H1 (cell line): ENCODE measurements at regions of chr22 and their contacts with region 1.

Region 1: GRCh38 chr22:38317122-38317994 is at the start of gene CSNK1E:
- DNase-seq: peak in 1 of 2 experiments; percentile 84
- H3K4me3 ChIP-seq: peak within 1 kb of the TSS; percentile 88 to 99 (median 94)
- H3K27ac ChIP-seq: peak within 1 kb of the TSS; percentile 84
- H3K4me1 ChIP-seq: peaks cover 15 to 46% (median 40%) of the 10 kb centered on the region in 4 experiments
- H3K27me3 ChIP-seq: no peaks in the 10 kb centered on the region
- CTCF ChIP-seq: no peak
- EP300 ChIP-seq: no peak
- POLR2A ChIP-seq: peak; percentile 50 to 62
- RAD21 ChIP-seq: no peak
- total RNA-seq, gene CSNK1E: 244 and 247 TPM in 2 replicates

Region 2: DNA sequence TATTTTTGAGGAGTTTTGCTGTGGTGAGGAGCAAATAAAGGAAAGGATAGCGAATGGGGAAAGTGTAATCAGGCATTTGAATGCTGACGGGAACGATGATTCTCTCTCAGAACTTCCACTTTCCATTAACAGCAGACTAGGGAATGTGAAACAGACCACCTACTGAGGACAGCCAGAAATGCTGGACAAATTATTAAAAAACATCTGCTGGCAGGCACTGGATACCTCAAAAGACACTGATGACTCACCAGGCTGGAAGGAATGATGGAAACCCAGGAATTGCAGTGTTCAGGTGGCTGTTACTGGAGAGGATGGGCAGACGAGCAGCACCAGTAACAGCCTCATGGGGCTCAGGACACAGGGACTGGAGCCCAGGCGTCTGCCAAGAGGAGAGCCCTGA is 169.1 kb before region 1 on chr22:
- CTCF ChIA-PET with region 1: no interaction called
- POLR2A ChIA-PET with region 1: no interaction called
- DNase-seq: no peak
- H3K4me3 ChIP-seq: no peak overlapping the region
- H3K27ac ChIP-seq: no peak overlapping the region
- H3K4me1 ChIP-seq: peaks cover 0 to 3% (median 0%) of the 10 kb centered on the region in 4 experiments; a peak in 3 of 7 replicates
- H3K27me3 ChIP-seq: no peaks in the 10 kb centered on the region
- CTCF ChIP-seq: no peak
- EP300 ChIP-seq: no peak
- POLR2A ChIP-seq: no peak
- RAD21 ChIP-seq: no peak

Region 3: GRCh38 chr22:38291201-38291777 is 26.1 kb before region 1 on chr22:
- CTCF ChIA-PET with region 1: interaction called, 4 read pairs
- POLR2A ChIA-PET with region 1: interaction called, 20 read pairs
- DNase-seq: no peak
- H3K4me3 ChIP-seq: no peak overlapping the region
- H3K27ac ChIP-seq: no peak overlapping the region
- H3K4me1 ChIP-seq: peaks cover 0 to 3% (median 2%) of the 10 kb centered on the region in 4 experiments; a peak in 5 of 7 replicates
- H3K27me3 ChIP-seq: no peaks in the 10 kb centered on the region
- CTCF ChIP-seq: peak in 1 of 3 experiments; percentile 17; a peak in 1 of 4 replicates
- EP300 ChIP-seq: no peak
- POLR2A ChIP-seq: no peak
- RAD21 ChIP-seq: 0 out of 4 replicates have a peak, but pooled peaks of 1 of the 2 experiments have one; percentile 1

Region 4: GRCh38 chr22:38305471-38306448 is 11.6 kb before region 1 on chr22:
- CTCF ChIA-PET with region 1: interaction called, 24 read pairs
- POLR2A ChIA-PET with region 1: interaction called, 27 read pairs
- DNase-seq: no peak
- H3K4me3 ChIP-seq: no peak overlapping the region
- H3K27ac ChIP-seq: no peak overlapping the region
- H3K4me1 ChIP-seq: peaks cover 2 to 18% (median 8%) of the 10 kb centered on the region in 4 experiments
- H3K27me3 ChIP-seq: no peaks in the 10 kb centered on the region
- CTCF ChIP-seq: peak; percentile 59 to 73 (median 65)
- EP300 ChIP-seq: no peak
- POLR2A ChIP-seq: no peak
- RAD21 ChIP-seq: peak; percentile 59 to 67

Region 5: DNA sequence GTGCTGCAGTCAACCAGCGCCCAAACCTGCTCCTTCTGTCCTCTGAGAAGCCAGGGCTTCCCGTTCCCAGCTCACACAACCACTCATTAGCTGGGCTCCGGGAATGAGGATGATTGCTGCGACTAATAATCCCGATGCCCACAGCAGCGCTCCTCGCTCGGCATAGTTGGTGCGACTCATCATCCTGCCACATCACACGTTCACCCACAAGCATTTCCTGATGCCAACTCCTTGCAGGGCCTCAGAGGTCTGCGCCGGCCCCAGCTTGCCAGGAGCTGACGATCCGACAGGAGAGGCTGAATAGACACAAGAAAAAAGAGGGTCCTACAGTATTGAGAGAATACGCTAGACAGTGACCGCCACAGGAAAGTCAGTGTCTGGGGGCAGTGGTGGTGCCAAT is 10.4 kb after region 1 on chr22:
- CTCF ChIA-PET with region 1: interaction called, 7 read pairs
- POLR2A ChIA-PET with region 1: interaction called, 77 read pairs
- DNase-seq: no peak
- H3K4me3 ChIP-seq: no peak overlapping the region
- H3K27ac ChIP-seq: peak overlapping the region; percentile 60
- H3K4me1 ChIP-seq: peaks cover 14 to 36% (median 29%) of the 10 kb centered on the region in 4 experiments
- H3K27me3 ChIP-seq: no peaks in the 10 kb centered on the region
- CTCF ChIP-seq: no peak
- EP300 ChIP-seq: no peak
- POLR2A ChIP-seq: no peak
- RAD21 ChIP-seq: no peak

Region 6: DNA sequence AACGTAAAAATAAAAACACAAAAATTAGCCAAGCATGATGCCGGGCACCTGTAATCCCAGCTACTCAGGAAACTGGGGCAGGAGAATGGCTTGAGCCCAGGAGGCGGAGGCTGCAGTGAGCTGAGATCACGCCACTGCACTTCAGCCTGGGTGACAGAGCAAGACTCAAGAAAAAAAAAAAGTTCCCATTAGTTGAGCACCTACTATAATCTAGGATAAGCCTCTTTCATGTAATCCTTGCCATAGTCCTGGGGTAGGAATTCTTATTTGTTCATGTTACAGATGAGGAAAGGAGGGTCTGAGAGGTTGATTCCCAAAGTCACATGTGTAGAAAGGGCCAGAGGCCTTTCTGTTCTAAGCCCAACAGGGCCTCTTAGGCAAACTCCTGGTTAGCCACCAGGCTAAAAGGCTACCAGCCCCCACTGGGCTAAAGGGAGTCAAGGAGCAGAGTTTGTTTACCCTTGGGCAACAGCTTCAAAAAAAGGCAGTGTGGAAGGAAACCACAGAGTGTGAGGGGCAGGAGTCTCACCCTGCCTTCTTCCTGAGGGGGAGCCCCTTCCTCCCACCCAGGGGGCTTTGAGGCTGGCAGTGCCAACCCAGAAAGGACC is 21.5 kb after region 1 on chr22:
- CTCF ChIA-PET with region 1: interaction called, 3 read pairs
- POLR2A ChIA-PET with region 1: interaction called, 17 read pairs
- DNase-seq: no peak
- H3K4me3 ChIP-seq: no peak overlapping the region
- H3K27ac ChIP-seq: no peak overlapping the region
- H3K4me1 ChIP-seq: peaks cover under 1 to 13% (median 8%) of the 10 kb centered on the region in 4 experiments
- H3K27me3 ChIP-seq: no peaks in the 10 kb centered on the region
- CTCF ChIP-seq: no peak
- EP300 ChIP-seq: no peak
- POLR2A ChIP-seq: no peak
- RAD21 ChIP-seq: no peak

Region 7: DNA sequence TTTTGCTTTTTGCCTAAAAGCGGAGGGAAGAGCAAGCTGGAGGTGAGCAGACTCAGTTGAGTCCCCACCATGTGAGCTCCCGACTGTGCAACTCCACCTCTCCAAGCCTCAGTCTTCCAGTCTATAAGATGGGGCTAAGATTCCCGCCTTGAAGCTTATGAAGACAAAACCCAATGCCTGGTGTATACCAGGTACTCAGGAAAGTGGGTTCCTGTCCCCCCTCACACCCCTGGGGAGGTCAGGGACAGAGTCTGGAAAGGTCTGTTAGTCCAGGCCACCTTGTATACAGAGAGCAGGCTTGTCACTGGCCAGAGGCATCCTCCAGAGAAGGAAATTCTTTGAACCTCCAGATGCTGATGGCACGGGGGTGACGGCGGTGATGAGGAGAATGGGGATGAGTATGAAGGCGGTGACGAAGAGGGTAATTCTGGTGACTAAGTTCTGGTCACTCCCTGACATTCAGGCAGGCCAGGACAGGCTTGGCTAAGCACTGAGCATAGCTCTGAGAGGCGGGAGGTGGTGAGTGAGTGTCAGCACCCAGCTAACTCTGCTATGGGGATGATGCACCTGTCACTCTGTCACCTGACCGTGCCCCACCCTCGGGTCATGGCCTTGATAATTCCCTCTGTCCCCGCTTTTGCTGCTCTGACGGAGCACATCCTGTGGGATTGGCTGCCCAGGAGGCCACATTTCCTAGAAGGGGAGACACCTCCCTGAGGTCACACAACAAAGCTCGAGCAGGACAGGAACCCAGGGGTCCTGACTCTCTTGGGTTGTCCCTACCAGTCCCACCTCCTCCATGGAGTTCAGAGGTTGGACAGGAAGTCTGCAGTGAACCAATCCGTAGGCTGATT is 30.8 kb after region 1 on chr22:
- CTCF ChIA-PET with region 1: interaction called, 7 read pairs
- POLR2A ChIA-PET with region 1: interaction called, 27 read pairs
- DNase-seq: peak in 1 of 2 experiments; percentile 52
- H3K4me3 ChIP-seq: no peak overlapping the region
- H3K27ac ChIP-seq: no peak overlapping the region
- H3K4me1 ChIP-seq: peaks cover 0 to 25% (median 4%) of the 10 kb centered on the region in 4 experiments; a peak in 6 of 7 replicates
- H3K27me3 ChIP-seq: no peaks in the 10 kb centered on the region
- CTCF ChIP-seq: no peak
- EP300 ChIP-seq: no peak
- POLR2A ChIP-seq: no peak
- RAD21 ChIP-seq: no peak

Region 8: DNA sequence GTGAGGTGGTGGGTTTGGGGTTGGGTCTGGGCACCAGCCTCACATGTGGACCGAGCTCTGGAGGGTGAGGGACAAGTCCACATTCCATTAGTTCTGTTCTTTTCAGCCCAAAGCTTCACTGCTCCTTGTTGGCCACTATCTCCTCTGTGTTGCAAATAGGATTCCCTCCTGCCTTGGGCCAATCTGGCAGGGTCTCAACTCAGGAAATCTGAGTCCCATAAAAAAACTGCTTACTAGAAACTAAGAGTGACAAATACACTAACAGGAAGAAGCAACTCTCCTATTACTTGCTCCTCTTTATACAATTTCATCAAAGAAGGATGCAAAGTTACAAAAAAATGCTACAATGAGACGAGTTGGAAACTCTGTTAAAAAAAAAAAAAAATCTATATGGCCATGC is 66.1 kb after region 1 on chr22:
- CTCF ChIA-PET with region 1: no interaction called
- POLR2A ChIA-PET with region 1: no interaction called
- DNase-seq: no peak
- H3K4me3 ChIP-seq: no peak overlapping the region
- H3K27ac ChIP-seq: no peak overlapping the region
- H3K4me1 ChIP-seq: peaks cover 3 to 9% (median 6%) of the 10 kb centered on the region in 4 experiments; a peak in 6 of 7 replicates
- H3K27me3 ChIP-seq: no peaks in the 10 kb centered on the region
- CTCF ChIP-seq: no peak
- EP300 ChIP-seq: no peak
- POLR2A ChIP-seq: no peak
- RAD21 ChIP-seq: no peak